ENCODE measurements at regions of chr14 and their contacts with region 1.

Region 1: GRCh38 chr14:89618811-89619551 is 201.9 kb upstream of the FOXN3 start:
- DNase-seq: peak; percentile 69
- H3K4me3 Mint-ChIP-seq: peak overlapping the region; percentile 95
- H3K27ac Mint-ChIP-seq: peak overlapping the region; percentile 99
- H3K4me1 Mint-ChIP-seq: peaks cover 72% of the 10 kb centered on the region
- H3K27me3 Mint-ChIP-seq: no peaks in the 10 kb centered on the region

Region 2: GRCh38 chr14:89303457-89304435 is 315.2 kb before region 1 on chr14:
- intact Hi-C with region 1: loop called (anchors 1 kb)
- DNase-seq: peak; percentile 25
- H3K4me3 Mint-ChIP-seq: peak overlapping the region; percentile 76
- H3K27ac Mint-ChIP-seq: peak overlapping the region; percentile 87
- H3K4me1 Mint-ChIP-seq: peaks cover 57% of the 10 kb centered on the region
- H3K27me3 Mint-ChIP-seq: no peaks in the 10 kb centered on the region

Region 3: DNA sequence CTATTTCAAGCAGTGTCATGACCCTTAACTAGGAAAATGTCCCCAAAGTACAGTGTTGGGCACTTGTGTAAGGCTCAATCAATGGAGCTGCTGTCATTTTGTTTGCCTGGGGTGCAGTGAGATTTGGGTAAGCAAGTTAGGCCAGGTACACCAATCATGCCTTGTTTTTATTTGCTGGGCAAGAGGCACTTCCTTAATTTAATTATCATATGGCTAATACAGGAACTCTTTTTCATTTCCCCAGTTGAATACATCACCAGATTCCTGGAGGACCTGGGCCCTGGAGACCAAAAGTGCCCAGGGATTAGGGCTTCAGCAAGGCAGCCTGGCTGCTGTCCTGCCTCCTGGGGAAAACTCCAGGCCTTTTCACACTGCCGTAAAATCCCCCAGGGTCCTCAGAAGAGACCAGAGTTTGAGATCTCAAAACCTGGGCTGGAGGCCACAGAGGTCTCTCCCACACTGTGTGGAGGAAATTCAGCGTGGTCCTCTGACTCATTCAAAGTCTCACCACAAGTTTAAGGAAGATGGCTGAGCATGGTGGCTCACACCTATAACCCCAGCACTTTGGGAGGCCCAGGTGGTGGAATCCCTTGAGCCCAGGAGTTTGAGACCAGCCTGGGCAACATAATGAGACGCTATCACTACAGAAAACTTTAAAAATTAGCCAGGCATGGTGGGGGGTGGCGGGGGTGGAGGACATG is 173.6 kb before region 1 on chr14:
- intact Hi-C with region 1: loop called (anchors 1 kb)
- DNase-seq: peak; percentile 11
- H3K4me3 Mint-ChIP-seq: peak overlapping the region; percentile 37
- H3K27ac Mint-ChIP-seq: peak overlapping the region; percentile 83
- H3K4me1 Mint-ChIP-seq: peaks cover 54% of the 10 kb centered on the region
- H3K27me3 Mint-ChIP-seq: no peaks in the 10 kb centered on the region

Region 4: DNA sequence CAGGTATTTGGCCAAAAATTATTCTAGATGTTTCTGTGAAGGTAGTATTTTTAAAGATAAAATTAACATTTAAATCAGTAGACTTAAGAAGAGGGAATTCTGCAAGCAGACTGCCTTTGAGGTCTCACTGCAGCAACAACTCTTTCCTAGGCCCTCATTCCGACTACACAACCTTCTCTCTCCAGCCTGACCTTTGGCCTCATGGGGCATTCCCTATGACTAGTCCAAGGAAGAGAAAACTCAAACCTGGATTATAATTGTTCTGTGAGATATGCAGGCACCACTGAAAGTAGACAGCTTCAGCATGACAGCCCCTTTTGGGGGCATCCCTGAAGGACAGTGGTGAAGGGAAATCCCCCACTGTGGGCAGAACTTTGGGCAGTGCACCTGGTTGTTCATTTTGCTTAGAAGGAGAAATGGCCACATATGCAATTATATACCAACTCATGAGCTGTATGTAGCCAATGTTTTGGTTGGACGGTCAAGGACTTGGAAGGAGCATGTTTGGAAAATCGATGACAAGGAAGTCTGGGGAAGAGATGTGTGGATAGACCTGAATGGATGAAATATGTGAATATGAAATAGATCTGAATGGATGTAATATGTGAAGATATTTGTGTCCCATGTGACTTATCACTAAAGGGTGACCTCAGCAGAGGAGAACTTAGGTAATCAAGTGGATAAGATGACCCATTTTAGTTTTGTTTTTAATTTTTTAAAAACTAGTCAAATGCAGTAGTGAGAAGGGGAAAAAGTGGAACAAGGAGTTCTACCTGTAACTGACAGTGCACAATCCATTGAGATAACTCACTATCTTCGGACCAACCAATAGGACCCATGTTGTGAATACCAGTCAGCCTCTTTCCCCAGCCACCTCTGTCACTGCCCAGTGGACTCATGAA is 31.3 kb after region 1 on chr14:
- intact Hi-C with region 1: no loop called
- DNase-seq: no peak
- H3K4me3 Mint-ChIP-seq: no peak overlapping the region
- H3K27ac Mint-ChIP-seq: no peak overlapping the region
- H3K4me1 Mint-ChIP-seq: peaks cover 5% of the 10 kb centered on the region
- H3K27me3 Mint-ChIP-seq: no peaks in the 10 kb centered on the region

Region 5: GRCh38 chr14:89681086-89682018 is 62.4 kb after region 1 on chr14:
- intact Hi-C with region 1: loop called (anchors 1 kb)
- DNase-seq: peak; percentile 22
- H3K4me3 Mint-ChIP-seq: peak overlapping the region; percentile 66
- H3K27ac Mint-ChIP-seq: peak overlapping the region; percentile 89
- H3K4me1 Mint-ChIP-seq: peaks cover 45% of the 10 kb centered on the region
- H3K27me3 Mint-ChIP-seq: no peaks in the 10 kb centered on the region

Region 6: DNA sequence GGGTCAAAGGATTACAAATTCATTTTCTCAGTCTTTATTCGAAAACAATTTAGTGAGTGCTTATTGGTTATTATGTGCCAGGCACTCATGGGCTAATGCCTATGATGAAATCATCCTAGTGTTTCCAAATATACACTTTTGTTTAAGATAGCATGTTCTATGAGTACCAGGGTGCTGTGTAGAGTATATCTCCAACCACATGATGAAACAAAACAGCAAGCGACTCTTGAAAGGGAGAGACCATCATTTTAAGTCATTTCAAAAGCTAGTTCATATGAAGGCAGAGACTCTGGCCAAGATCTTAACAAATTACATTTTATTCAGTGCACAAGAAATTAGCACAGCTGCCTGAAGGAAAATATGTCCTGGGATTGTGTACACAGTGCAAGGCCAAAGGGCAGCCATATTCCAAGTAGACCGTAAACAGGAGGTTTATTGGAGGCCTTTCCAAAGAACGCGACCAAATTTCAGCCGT is 131.3 kb after region 1 on chr14:
- intact Hi-C with region 1: loop called (anchors 5 kb)
- DNase-seq: no peak
- H3K4me3 Mint-ChIP-seq: no peak overlapping the region
- H3K27ac Mint-ChIP-seq: no peak overlapping the region
- H3K4me1 Mint-ChIP-seq: peaks cover 23% of the 10 kb centered on the region
- H3K27me3 Mint-ChIP-seq: no peaks in the 10 kb centered on the region